K562 (cell line): ENCODE measurements at regions of chr20 and their contacts with region 1.

Region 1: GRCh38 chr20:31822421-31823330 is 3.5 kb downstream of the MYLK2 start:
- DNase-seq: peak; percentile 79 to 89 (median 86)
- ATAC-seq: peak; percentile 95
- H3K4me3 ChIP-seq: no peak overlapping the region
- H3K27ac ChIP-seq: no peak overlapping the region
- H3K4me1 ChIP-seq: peaks cover 0 to 10% of the 10 kb centered on the region in 2 experiments; a peak in 3 of 5 replicates
- H3K27me3 ChIP-seq: peaks cover 11 to 16% of the 10 kb centered on the region in 2 experiments; a peak in 3 of 5 replicates
- CTCF ChIP-seq: peak; percentile 90 to 95 (median 95)
- EP300 ChIP-seq: no peak
- POLR2A ChIP-seq: no peak
- RAD21 ChIP-seq: peak; percentile 95 to 96

Region 2: DNA sequence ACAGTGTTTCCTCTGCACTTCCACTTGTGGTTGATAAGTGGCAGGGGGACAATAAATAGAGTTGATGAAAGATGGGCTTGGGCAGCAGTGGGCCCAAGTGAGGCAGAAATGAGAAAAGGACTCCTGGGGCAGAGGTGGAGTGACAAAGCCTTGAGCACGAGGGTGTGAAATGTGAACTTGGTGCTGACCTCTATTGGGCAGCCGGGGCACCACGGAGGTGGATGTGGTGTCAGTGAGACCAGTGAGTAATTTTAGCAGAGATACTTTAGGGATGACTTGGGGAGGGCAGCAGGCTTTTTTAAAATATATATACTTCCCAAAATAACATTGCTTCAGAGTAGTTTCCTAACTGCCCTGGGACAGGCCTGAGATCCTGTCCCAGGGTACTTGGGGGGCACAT is 34.1 kb before region 1 on chr20:
- CTCF ChIA-PET with region 1: no interaction called
- POLR2A ChIA-PET with region 1: no interaction called
- in situ Hi-C with region 1: no loop called
- intact Hi-C with region 1: no loop called
- DNase-seq: no peak
- ATAC-seq: peak; percentile 51
- H3K4me3 ChIP-seq: no peak overlapping the region
- H3K27ac ChIP-seq: no peak overlapping the region
- H3K4me1 ChIP-seq: no peaks in the 10 kb centered on the region
- H3K27me3 ChIP-seq: no peaks in the 10 kb centered on the region
- CTCF ChIP-seq: 0 out of 6 replicates have a peak, but pooled peaks of 2 of the 3 experiments have one; percentile 4 to 5
- EP300 ChIP-seq: no peak
- POLR2A ChIP-seq: no peak
- RAD21 ChIP-seq: no peak

Region 3: DNA sequence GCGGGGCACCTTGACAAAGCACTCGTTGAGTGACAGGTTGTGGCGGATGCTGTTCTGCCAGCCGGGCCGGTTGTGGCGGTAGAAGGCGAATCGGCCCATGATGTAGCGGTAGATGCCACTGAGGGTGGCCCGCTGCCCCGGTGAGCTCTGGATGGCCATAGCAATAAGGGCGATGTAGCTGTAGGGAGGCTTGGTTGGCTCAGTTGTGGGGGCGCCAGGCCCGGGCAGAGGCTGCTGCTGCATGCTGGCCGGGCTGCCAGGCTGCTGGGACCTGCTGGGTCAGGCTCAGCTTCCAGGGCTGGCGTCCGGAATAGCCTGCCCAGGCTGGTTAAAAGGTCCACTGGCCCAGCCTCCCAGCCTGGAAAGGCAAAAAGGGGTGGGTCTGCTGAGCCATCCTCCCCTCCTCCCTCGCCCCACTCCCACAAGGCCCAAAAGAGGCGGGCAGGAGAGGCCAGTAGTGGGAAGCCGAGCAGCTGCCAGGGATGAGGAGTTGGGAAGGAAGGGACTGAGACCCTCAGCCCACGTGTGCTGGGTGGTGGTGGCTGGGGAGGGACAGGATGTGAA is 22.7 kb after region 1 on chr20 and contains the start of gene FOXS1:
- CTCF ChIA-PET with region 1: interaction called, 18 read pairs
- POLR2A ChIA-PET with region 1: no interaction called
- in situ Hi-C with region 1: no loop called
- intact Hi-C with region 1: loop called (anchors 1 kb)
- DNase-seq: no peak
- ATAC-seq: no peak
- H3K4me3 ChIP-seq: no peak within 1 kb of the TSS
- H3K27ac ChIP-seq: no peak within 1 kb of the TSS; the same call in 2 of the 3 replicates
- H3K4me1 ChIP-seq: peaks cover 0 to 47% of the 10 kb centered on the region in 2 experiments; a peak in 3 of 5 replicates
- H3K27me3 ChIP-seq: peaks cover 10 to 30% of the 10 kb centered on the region in 2 experiments; a peak in 4 of 5 replicates
- CTCF ChIP-seq: no peak
- EP300 ChIP-seq: no peak
- POLR2A ChIP-seq: no peak
- RAD21 ChIP-seq: no peak
- polyA plus RNA-seq, gene FOXS1: not detected

Region 4: GRCh38 chr20:32031007-32031958 is 208.6 kb after region 1 on chr20:
- CTCF ChIA-PET with region 1: interaction called, 9 read pairs
- POLR2A ChIA-PET with region 1: no interaction called
- in situ Hi-C with region 1: no loop called
- intact Hi-C with region 1: loop called (anchors 10 kb)
- DNase-seq: peak; percentile 67 to 72 (median 72)
- ATAC-seq: peak; percentile 82
- H3K4me3 ChIP-seq: no peak overlapping the region
- H3K27ac ChIP-seq: no peak overlapping the region
- H3K4me1 ChIP-seq: peaks cover 0 to 11% of the 10 kb centered on the region in 2 experiments; a peak in 4 of 5 replicates
- H3K27me3 ChIP-seq: peaks cover 6 to 49% of the 10 kb centered on the region in 2 experiments; a peak in 4 of 5 replicates
- CTCF ChIP-seq: peak; percentile 92 to 98 (median 98)
- EP300 ChIP-seq: no peak
- POLR2A ChIP-seq: no peak
- RAD21 ChIP-seq: peak; percentile 86 to 87

Region 5: GRCh38 chr20:32091888-32092346 is 269.2 kb after region 1 on chr20:
- CTCF ChIA-PET with region 1: interaction called, 13 read pairs
- POLR2A ChIA-PET with region 1: no interaction called
- in situ Hi-C with region 1: no loop called
- intact Hi-C with region 1: loop called (anchors 2 kb)
- DNase-seq: peak; percentile 78 to 81 (median 79)
- ATAC-seq: peak; percentile 97
- H3K4me3 ChIP-seq: no peak overlapping the region
- H3K27ac ChIP-seq: no peak overlapping the region
- H3K4me1 ChIP-seq: no peaks in the 10 kb centered on the region; a peak in 2 of 5 replicates
- H3K27me3 ChIP-seq: peaks cover 20 to 51% of the 10 kb centered on the region in 2 experiments
- CTCF ChIP-seq: peak; percentile 88 to 94 (median 88)
- EP300 ChIP-seq: no peak
- POLR2A ChIP-seq: no peak
- RAD21 ChIP-seq: peak; percentile 65 to 69